ENCODE measurements at regions of chr7 and their contacts with region 1.

Region 1: GRCh38 chr7:50369143-50370026 is 64.9 kb downstream of the IKZF1 start:
- DNase-seq: peak; percentile 76
- ATAC-seq: peak; percentile 45
- H3K4me3 Mint-ChIP-seq: peak overlapping the region; percentile 6
- H3K27ac Mint-ChIP-seq: peak overlapping the region; percentile 76
- H3K4me1 Mint-ChIP-seq: peaks cover 96% of the 10 kb centered on the region
- H3K27me3 Mint-ChIP-seq: no peaks in the 10 kb centered on the region

Region 2: DNA sequence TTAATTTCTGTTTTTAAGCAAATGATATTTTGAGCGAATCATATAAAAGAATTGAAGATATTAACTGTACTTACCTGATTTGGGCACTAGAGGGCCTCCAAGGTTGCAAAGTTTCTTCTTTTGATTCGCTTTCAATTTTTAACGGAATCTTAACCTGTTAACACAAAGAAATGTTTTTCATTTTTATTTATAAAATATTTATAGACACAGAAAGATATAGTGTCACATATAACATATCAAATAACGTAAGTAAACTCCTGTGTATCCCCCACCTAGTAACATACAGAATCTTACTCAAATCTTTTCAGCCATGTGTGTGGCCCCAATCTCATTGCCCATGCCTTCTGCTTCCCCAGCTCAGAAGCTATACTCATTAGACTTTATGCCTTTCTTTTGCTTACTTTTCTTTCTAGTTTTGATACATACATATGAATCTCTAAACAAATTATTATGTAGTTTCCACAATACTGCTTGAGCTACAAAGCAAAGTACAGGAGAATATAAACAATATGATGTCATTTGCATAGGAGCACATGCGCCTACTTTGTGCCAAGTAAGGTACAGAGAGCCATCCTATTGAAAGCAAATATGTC is 226.9 kb before region 1 on chr7:
- CTCF ChIA-PET with region 1: interaction called, 52 read pairs
- POLR2A ChIA-PET with region 1: no interaction called
- DNase-seq: peak; percentile 71
- ATAC-seq: peak; percentile 72
- H3K4me3 Mint-ChIP-seq: peak overlapping the region; percentile 50
- H3K27ac Mint-ChIP-seq: peak overlapping the region; percentile 50
- H3K4me1 Mint-ChIP-seq: peaks cover 38% of the 10 kb centered on the region
- H3K27me3 Mint-ChIP-seq: peaks cover 6% of the 10 kb centered on the region

Region 3: GRCh38 chr7:50212666-50213621 is 156.4 kb before region 1 on chr7:
- CTCF ChIA-PET with region 1: interaction called, 154 read pairs
- POLR2A ChIA-PET with region 1: no interaction called
- DNase-seq: peak; percentile 68
- ATAC-seq: peak; percentile 66
- H3K4me3 Mint-ChIP-seq: peak overlapping the region; percentile 9
- H3K27ac Mint-ChIP-seq: peak overlapping the region; percentile 94
- H3K4me1 Mint-ChIP-seq: peaks cover 99% of the 10 kb centered on the region
- H3K27me3 Mint-ChIP-seq: no peaks in the 10 kb centered on the region

Region 4: GRCh38 chr7:50266635-50267386 is 102.6 kb before region 1 on chr7:
- CTCF ChIA-PET with region 1: interaction called, 12 read pairs
- POLR2A ChIA-PET with region 1: interaction called, 7 read pairs
- DNase-seq: peak; percentile 91
- ATAC-seq: peak; percentile 71
- H3K4me3 Mint-ChIP-seq: peak overlapping the region; percentile 69
- H3K27ac Mint-ChIP-seq: peak overlapping the region; percentile 98
- H3K4me1 Mint-ChIP-seq: peaks cover 95% of the 10 kb centered on the region
- H3K27me3 Mint-ChIP-seq: no peaks in the 10 kb centered on the region

Region 5: GRCh38 chr7:50317221-50317678 is 52.1 kb before region 1 on chr7:
- CTCF ChIA-PET with region 1: interaction called, 166 read pairs
- POLR2A ChIA-PET with region 1: interaction called, 23 read pairs
- DNase-seq: peak; percentile 71
- ATAC-seq: peak; percentile 71
- H3K4me3 Mint-ChIP-seq: peak overlapping the region; percentile 76
- H3K27ac Mint-ChIP-seq: peak overlapping the region; percentile 93
- H3K4me1 Mint-ChIP-seq: peaks cover 94% of the 10 kb centered on the region
- H3K27me3 Mint-ChIP-seq: no peaks in the 10 kb centered on the region

Region 6: GRCh38 chr7:50349963-50350944 is 19.1 kb before region 1 on chr7:
- CTCF ChIA-PET with region 1: interaction called, 322 read pairs
- POLR2A ChIA-PET with region 1: interaction called, 101 read pairs
- DNase-seq: peak; percentile 82
- ATAC-seq: peak; percentile 67
- H3K4me3 Mint-ChIP-seq: peak overlapping the region; percentile 64
- H3K27ac Mint-ChIP-seq: peak overlapping the region; percentile 89
- H3K4me1 Mint-ChIP-seq: peaks cover 97% of the 10 kb centered on the region
- H3K27me3 Mint-ChIP-seq: no peaks in the 10 kb centered on the region

Region 7: GRCh38 chr7:50400114-50400513 is 30.7 kb after region 1 on chr7:
- CTCF ChIA-PET with region 1: no interaction called
- POLR2A ChIA-PET with region 1: no interaction called
- DNase-seq: peak; percentile 18
- ATAC-seq: no peak
- H3K4me3 Mint-ChIP-seq: no peak overlapping the region
- H3K27ac Mint-ChIP-seq: no peak overlapping the region
- H3K4me1 Mint-ChIP-seq: peaks cover 52% of the 10 kb centered on the region
- H3K27me3 Mint-ChIP-seq: no peaks in the 10 kb centered on the region

Region 8: DNA sequence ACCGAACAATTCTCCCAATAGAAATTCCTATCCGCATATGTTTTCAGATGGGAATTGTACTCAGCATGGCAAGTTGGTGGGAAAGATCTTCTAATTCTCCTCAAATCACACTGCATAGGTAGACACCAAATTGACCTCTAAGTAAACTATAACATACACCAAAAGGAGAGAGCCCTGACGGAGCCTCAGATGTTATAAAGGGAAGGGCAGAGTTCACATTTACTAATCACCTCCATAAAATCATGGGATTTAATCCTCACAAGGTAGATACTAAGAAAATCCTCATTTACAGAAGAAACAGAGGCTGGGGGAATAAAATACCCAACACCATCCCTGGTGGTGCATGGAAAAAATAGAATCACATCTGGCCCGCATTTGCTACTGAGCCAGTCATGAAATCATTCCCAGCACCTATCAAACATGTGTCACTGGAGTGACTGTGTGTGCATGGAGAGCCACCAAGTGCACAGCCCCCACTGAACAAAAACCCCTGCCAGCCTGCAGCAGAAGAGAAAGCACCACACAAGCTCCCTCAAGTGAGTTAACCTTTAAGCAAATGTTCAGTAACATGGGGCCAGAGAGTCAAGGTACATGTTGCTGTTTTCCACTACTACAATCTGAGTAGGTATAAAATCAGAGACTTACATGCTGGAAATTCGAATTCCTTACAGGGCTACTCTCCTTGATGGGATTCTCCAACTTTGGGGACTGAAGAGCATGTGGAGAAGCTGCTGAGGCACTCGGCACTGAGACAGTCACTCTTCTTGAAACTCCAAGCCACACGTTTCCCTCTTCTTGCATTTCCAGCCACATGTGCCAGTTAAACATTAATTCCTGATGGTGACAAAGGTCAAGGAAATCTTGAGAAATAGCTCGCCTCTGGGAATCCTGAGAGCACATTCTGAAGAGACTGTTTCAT is 195.5 kb after region 1 on chr7 and contains the start of gene DDC:
- CTCF ChIA-PET with region 1: no interaction called
- POLR2A ChIA-PET with region 1: no interaction called
- DNase-seq: no peak
- ATAC-seq: no peak
- H3K4me3 Mint-ChIP-seq: no peak within 1 kb of the TSS
- H3K27ac Mint-ChIP-seq: no peak within 1 kb of the TSS
- H3K4me1 Mint-ChIP-seq: no peaks in the 10 kb centered on the region
- H3K27me3 Mint-ChIP-seq: peaks cover 11% of the 10 kb centered on the region
- total RNA-seq, gene DDC: not detected

Region 9: DNA sequence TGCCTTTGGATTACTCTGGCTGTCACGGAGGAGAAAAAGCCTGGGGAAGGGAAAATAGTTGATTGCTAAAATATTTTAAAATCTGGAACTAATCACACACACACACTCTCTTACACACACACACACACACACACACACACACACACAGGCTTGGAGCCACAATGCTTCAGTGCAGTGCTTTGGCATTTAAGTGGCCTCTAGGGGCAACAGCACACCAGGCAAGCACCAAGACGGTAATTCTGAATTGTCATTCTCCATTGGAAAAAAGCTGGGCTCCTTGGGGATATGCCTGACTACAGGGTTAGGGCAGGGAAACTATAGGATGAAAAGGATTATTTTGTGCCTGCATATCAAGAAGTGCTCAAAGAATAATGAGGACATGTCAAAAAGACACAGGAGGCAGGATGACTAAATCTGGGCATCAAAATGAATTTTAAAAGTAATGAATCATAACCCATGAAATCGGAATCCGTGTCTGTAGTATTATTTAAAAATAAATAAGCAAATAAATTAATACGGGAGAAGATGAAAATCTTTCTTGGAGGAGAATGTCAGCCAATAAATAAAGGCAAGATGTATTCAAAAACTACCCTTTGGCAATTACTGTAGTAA is 226.2 kb after region 1 on chr7:
- CTCF ChIA-PET with region 1: no interaction called
- POLR2A ChIA-PET with region 1: no interaction called
- DNase-seq: no peak
- ATAC-seq: no peak
- H3K4me3 Mint-ChIP-seq: no peak overlapping the region
- H3K27ac Mint-ChIP-seq: no peak overlapping the region
- H3K4me1 Mint-ChIP-seq: peaks cover 24% of the 10 kb centered on the region
- H3K27me3 Mint-ChIP-seq: no peaks in the 10 kb centered on the region